Calu3 (cell line): ENCODE measurements at regions of chr16 and their contacts with region 1.

Region 1: GRCh38 chr16:68902008-68902968 is 59.0 kb downstream of the TANGO6 start:
- DNase-seq: peak; percentile 76
- H3K4me3 Mint-ChIP-seq: no peak overlapping the region
- H3K27ac Mint-ChIP-seq: no peak overlapping the region
- H3K4me1 Mint-ChIP-seq: peaks cover 10% of the 10 kb centered on the region
- H3K27me3 Mint-ChIP-seq: no peaks in the 10 kb centered on the region
- CTCF ChIP-seq: peak; percentile 82

Region 2: GRCh38 chr16:68843482-68844210 is 58.6 kb before region 1 on chr16 and contains the start of gene TANGO6:
- CTCF ChIA-PET with region 1: interaction called, 4 read pairs
- intact Hi-C with region 1: loop called (anchors 2 kb)
- DNase-seq: peak; percentile 92
- H3K4me3 Mint-ChIP-seq: peak within 1 kb of the TSS; percentile 69
- H3K27ac Mint-ChIP-seq: peak within 1 kb of the TSS; percentile 27
- H3K4me1 Mint-ChIP-seq: peaks cover 8% of the 10 kb centered on the region
- H3K27me3 Mint-ChIP-seq: no peaks in the 10 kb centered on the region
- CTCF ChIP-seq: peak; percentile 21
- total RNA-seq, gene TANGO6: 18.0 TPM in 2 replicates

Region 3: DNA sequence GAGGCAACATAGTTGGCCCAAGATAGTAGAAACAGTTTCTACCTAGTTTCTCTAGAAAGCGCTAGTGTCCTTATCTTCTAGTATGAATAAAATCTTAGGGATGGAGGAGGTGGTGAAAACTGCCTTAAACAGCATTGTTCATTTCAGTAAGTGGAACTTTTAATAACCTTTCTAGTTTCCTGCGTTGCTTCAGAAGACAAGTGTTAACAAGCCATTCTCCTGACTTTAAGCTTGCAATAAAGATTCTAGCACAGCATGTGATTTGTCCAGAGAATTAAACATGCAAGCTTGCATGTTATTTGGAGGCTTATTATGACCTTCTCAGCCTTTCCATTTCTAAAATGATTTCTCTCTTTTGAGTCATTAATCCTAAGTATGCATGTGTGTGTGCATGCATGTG is 13.3 kb after region 1 on chr16:
- CTCF ChIA-PET with region 1: no interaction called
- intact Hi-C with region 1: no loop called
- DNase-seq: no peak
- H3K4me3 Mint-ChIP-seq: no peak overlapping the region
- H3K27ac Mint-ChIP-seq: no peak overlapping the region
- H3K4me1 Mint-ChIP-seq: no peaks in the 10 kb centered on the region
- H3K27me3 Mint-ChIP-seq: no peaks in the 10 kb centered on the region
- CTCF ChIP-seq: no peak

Region 4: DNA sequence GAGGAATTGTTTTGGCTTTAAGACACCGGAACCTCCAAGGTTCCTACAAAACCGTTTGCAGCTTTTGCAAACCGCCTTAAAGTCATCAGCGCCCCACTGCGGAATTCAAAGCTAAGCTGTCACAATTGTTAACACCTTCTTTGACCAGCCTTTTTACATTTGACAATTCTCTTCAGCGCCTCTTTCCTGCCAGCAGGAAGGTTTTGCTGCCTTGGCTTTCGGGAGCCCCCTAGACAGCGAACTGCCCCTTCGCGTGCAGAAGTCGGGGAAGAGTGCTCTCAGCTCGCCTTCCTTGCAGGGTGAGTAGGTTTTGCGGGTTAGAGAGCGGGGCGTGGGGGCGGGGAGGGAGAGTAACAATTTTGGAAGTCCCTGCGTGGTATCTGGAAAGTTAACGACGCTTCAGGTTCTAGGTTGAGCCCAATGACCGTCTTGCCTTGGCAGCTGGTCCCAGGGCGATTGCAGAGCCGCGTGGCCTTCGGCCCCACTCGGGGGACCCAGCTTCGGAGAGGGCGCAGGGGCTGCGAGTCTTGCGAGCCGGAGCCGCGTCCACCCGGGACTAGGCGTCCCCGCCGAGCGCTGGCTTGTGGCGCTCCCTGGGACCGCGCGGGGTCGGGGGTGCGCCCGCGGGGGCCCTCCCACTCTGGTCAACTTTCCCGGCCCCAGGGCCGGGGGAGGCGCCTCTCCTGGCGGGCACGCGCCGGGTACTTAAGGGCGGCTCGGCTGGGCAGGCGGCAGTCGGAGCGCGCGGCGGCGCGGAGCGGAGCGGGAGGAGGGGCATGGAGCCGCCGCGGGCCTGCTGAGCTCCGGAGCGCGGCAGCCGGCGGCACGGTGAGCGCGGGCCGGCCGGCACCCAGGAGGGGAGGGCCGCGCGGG is 203.4 kb after region 1 on chr16 and contains the start of gene HAS3:
- CTCF ChIA-PET with region 1: interaction called, 10 read pairs
- intact Hi-C with region 1: loop called (anchors 2 kb)
- DNase-seq: peak; percentile 88
- H3K4me3 Mint-ChIP-seq: peak within 1 kb of the TSS; percentile 85
- H3K27ac Mint-ChIP-seq: peak within 1 kb of the TSS; percentile 87
- H3K4me1 Mint-ChIP-seq: peaks cover 35% of the 10 kb centered on the region
- H3K27me3 Mint-ChIP-seq: peaks cover 3% of the 10 kb centered on the region
- CTCF ChIP-seq: peak; percentile 34
- total RNA-seq, gene HAS3: 29.8 and 33.2 TPM in 2 replicates